Common myeloid progenitor, CD34-positive (primary cell): ENCODE measurements at regions of chr12 and their contacts with region 1.

Region 1: DNA sequence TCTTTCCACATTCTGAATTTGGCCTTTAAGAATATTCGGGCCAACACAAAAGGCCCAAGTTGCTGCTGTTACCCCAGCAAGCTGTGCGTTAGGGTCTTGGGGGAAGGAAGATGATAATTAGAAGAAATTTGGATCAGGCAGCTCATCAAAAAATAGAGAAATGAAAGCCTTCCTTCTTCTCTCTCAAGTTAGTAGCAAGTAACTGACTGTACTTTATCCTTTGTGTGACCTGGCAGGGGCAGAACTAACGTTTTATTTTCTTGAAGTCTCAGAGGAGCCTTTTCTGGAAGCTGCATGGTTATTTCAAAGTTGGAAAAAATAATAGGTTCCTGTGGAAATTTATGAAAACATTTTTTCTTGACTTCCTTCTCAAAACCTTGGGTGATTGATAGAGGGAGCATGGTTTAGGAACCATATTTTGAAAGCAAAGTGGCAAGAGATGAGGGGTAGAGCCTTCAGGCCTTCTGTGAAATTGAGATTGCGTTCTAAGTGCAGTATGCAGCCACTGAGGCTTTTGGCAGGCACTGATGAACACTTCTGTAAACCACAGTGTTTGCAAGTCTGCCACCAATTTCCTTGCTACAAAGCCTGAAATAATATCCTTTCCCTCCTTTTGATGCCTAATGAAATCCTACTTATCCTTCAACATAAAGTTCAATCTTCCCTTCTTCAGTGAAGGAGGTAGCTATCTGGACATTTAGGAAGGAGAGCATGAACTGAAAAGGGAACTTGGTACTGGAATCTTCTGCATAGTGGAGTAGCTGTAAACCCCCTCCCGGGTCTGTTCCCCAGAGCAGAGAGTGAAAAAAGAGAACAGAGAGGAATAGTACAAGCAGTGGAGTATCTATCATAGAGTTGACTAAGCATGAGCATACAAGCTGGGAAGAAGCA is 123.2 kb downstream of the FGD4 start:
- DNase-seq: peak in 2 of 3 donors; percentile 60 to 75
- H3K4me3 ChIP-seq: peak overlapping the region in 4 of 7 experiments; percentile 2 to 61 (median 18)
- H3K27ac ChIP-seq: peak overlapping the region; percentile 50 to 64
- H3K4me1 ChIP-seq: peaks cover 20 to 26% (median 23%) of the 10 kb centered on the region in 4 experiments
- H3K27me3 ChIP-seq: no peaks in the 10 kb centered on the region

Region 2: GRCh38 chr12:32508626-32509025 is 13.9 kb before region 1 on chr12:
- CTCF ChIA-PET with region 1: no interaction called
- POLR2A ChIA-PET with region 1: no interaction called
- DNase-seq: no peak
- H3K4me3 ChIP-seq: no peak overlapping the region
- H3K27ac ChIP-seq: no peak overlapping the region
- H3K4me1 ChIP-seq: peaks cover 0 to 18% (median 4%) of the 10 kb centered on the region in 4 experiments
- H3K27me3 ChIP-seq: no peaks in the 10 kb centered on the region

Region 3: GRCh38 chr12:32533971-32534590 is 11.5 kb after region 1 on chr12:
- CTCF ChIA-PET with region 1: interaction called, 11 read pairs
- POLR2A ChIA-PET with region 1: interaction called, 4 read pairs
- DNase-seq: peak in 2 of 3 donors; percentile 41 to 54
- H3K4me3 ChIP-seq: peak overlapping the region in 6 of 7 experiments; percentile 49 to 82 (median 64)
- H3K27ac ChIP-seq: peak overlapping the region in 1 of 2 experiments; percentile 60
- H3K4me1 ChIP-seq: peaks cover 9 to 39% (median 26%) of the 10 kb centered on the region in 4 experiments
- H3K27me3 ChIP-seq: no peaks in the 10 kb centered on the region

Region 4: GRCh38 chr12:32549675-32550079 is 27.1 kb after region 1 on chr12:
- CTCF ChIA-PET with region 1: no interaction called
- POLR2A ChIA-PET with region 1: no interaction called
- DNase-seq: no peak
- H3K4me3 ChIP-seq: no peak overlapping the region
- H3K27ac ChIP-seq: no peak overlapping the region
- H3K4me1 ChIP-seq: peaks cover 0 to 15% (median 4%) of the 10 kb centered on the region in 4 experiments
- H3K27me3 ChIP-seq: no peaks in the 10 kb centered on the region

Region 5: DNA sequence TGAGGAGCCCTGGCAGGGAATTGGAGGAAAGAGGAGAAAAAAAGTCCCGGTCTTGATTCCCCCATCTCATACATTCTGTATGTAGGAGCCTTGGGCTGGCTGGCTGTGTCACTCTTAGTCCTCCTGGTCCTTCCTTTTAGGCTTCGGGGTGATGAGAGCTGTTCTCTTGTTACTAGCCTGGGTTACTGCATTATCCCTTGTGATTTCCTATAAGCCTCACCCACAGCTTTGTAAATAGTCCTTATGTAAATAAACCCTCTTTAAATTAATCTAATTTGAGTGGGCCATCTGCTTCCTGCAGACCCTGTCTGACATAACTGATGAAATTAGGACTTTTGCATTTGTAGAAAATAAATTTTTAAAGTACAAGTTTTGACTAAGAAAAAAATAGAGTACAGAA is 175.7 kb after region 1 on chr12:
- CTCF ChIA-PET with region 1: no interaction called
- POLR2A ChIA-PET with region 1: no interaction called
- DNase-seq: peak in 2 of 3 donors; percentile 38 to 63
- H3K4me3 ChIP-seq: no peak overlapping the region
- H3K27ac ChIP-seq: no peak overlapping the region
- H3K4me1 ChIP-seq: peaks cover 0 to 16% (median under 1%) of the 10 kb centered on the region in 4 experiments
- H3K27me3 ChIP-seq: no peaks in the 10 kb centered on the region